WTC11 (cell line): ENCODE measurements at regions of chr1 and their contacts with region 1.

Region 1: DNA sequence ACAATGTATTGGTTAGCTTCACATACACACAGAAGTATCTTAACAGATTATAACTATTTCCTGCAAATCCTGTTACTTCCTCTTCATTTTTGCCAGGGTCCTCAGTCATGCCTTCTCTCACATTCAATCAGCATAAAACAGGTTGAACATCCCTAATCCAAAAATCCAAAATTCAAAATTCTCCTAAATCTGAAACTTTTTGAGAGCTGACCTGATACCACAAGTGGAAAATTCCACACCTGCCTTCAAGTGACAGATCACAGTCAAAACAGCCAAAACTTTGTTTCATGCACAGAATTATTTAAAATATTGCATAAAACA is 62.9 kb upstream of the FBXO28 start:
- DNase-seq: no peak
- ATAC-seq: no peak
- H3K4me3 Mint-ChIP-seq: no peak overlapping the region
- H3K27ac Mint-ChIP-seq: no peak overlapping the region
- H3K4me1 Mint-ChIP-seq: peaks cover 8% of the 10 kb centered on the region
- H3K27me3 Mint-ChIP-seq: no peaks in the 10 kb centered on the region
- CTCF ChIP-seq: no peak; the same call in 1 of the 2 replicates

Region 2: DNA sequence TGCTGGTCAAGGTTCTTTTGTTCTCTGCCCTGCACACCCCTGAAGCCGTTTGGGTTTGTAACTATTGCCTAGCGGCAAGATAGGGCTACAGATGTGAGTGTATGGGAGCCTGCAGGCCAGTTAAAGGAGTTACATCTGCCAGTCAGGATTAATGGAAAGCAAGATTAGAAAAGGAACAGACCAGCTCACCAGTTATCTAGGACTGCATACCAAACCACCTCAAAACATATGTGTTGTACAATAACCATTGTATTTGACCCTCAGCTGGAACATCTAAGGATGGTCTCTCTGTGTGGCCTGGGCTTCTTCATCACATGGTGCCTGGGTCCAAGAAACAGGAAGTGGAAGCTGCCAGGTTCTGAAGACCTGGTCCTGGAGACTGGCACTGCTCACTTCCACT is 10.4 kb after region 1 on chr1:
- CTCF ChIA-PET with region 1: interaction called, 17 read pairs
- POLR2A ChIA-PET with region 1: no interaction called
- DNase-seq: no peak
- ATAC-seq: no peak
- H3K4me3 Mint-ChIP-seq: no peak overlapping the region
- H3K27ac Mint-ChIP-seq: no peak overlapping the region
- H3K4me1 Mint-ChIP-seq: peaks cover 16% of the 10 kb centered on the region
- H3K27me3 Mint-ChIP-seq: no peaks in the 10 kb centered on the region
- CTCF ChIP-seq: no peak

Region 3: DNA sequence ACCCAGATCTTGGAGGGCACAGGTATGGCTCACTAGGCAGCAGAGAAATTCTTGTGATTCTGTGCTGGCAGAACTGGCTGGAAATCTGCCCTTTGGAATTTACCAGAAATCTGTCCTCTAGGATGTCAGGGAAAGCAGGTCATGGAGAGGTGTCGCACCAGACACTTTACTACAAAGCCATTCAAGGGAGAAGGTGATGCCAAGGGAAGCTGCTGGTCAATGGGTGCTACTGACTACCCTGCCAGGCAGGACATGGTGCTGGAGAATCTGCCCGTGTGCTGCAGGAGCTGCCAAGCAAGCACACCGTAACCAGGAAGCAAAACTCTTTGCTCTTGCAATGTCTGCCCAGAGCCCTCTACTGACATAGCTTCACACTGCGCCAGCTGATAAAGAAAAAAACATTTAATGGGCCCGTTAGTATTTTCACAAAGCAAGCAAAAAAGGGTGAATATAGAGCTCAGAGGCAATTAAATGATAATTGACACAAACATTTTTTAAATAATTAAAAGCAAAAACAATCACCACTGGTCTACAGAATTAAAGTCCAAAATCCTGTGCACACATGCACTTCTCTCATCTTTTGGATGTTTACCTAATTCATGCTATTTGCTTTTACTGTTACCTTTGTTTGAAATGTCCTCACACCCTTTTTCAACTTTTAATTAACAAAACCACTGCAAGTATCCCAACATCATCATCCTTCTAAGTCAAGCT is 55.7 kb after region 1 on chr1:
- CTCF ChIA-PET with region 1: interaction called, 18 read pairs
- POLR2A ChIA-PET with region 1: no interaction called
- DNase-seq: peak; percentile 22
- ATAC-seq: peak; percentile 100
- H3K4me3 Mint-ChIP-seq: no peak overlapping the region
- H3K27ac Mint-ChIP-seq: no peak overlapping the region
- H3K4me1 Mint-ChIP-seq: peaks cover 3% of the 10 kb centered on the region; the same call in 1 of the 2 replicates
- H3K27me3 Mint-ChIP-seq: peaks cover 2% of the 10 kb centered on the region; the same call in 1 of the 2 replicates
- CTCF ChIP-seq: no peak